ENCODE measurements at regions of chr6 and their contacts with region 1.

Region 1: GRCh38 chr6:18264219-18264922 is at the start of gene DEK:
- DNase-seq: peak; percentile 85
- ATAC-seq: peak; percentile 68
- H3K4me3 ChIP-seq: peak within 1 kb of the TSS; percentile 68 to 89 (median 83)
- H3K4me3 Mint-ChIP-seq: peak within 1 kb of the TSS; percentile 93
- H3K27ac ChIP-seq: peak within 1 kb of the TSS; percentile 62 to 85
- H3K27ac Mint-ChIP-seq: peak within 1 kb of the TSS; percentile 98
- H3K4me1 ChIP-seq: peaks cover 42 to 47% of the 10 kb centered on the region in 2 donors
- H3K4me1 Mint-ChIP-seq: peaks cover 49% of the 10 kb centered on the region
- H3K27me3 ChIP-seq: peaks cover 0 to 3% (median 0%) of the 10 kb centered on the region in 4 experiments
- H3K27me3 Mint-ChIP-seq: no peaks in the 10 kb centered on the region
- CTCF ChIP-seq: peak; percentile 53
- total RNA-seq, gene DEK: 103 and 114 TPM in 2 replicates

Region 2: DNA sequence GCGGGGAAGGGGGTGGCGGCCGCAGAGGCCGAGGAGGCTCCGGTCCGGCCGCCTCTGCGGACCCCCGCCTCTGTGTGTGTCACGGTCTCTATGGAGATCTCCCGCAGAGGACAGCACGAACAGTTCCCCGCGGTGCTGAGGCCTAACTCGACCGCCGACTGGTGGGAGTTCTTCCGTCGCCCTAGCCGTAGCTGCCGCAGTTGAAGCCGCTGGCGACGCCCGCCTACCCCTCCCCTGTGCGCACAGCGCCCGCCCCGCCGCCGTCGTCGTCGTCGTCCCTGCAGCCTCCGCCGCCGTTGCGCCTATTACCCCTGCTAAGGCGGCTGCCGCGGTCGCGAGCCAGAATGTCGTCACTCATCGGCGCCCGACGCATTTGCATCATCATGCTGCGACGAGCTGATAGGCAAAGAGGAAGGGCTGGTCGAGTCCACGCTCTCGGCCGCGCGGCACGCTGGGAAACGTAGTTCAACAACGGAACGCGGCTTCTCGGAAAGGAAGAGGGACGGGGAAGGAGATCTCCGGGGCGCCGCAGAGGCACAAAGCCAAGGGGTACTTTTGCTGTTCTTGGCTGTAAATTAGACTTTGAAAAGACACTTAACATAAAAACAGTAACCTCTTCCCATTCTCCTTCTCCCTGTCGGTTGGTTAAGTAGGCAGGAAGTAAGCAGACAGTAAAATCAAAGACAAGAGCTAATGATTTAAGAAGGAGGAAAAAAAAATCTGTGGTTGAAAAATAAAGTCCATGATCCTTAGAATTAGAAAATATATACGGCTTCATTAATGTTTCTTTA is 557.6 kb before region 1 on chr6 and contains the start of gene NUP153:
- CTCF ChIA-PET with region 1: no interaction called
- POLR2A ChIA-PET with region 1: no interaction called
- intact Hi-C with region 1: loop called (anchors 2 kb)
- DNase-seq: peak; percentile 100
- ATAC-seq: peak; percentile 67
- H3K4me3 ChIP-seq: peak within 1 kb of the TSS; percentile 71 to 98 (median 94)
- H3K4me3 Mint-ChIP-seq: peak within 1 kb of the TSS; percentile 96
- H3K27ac ChIP-seq: peak within 1 kb of the TSS; percentile 99
- H3K27ac Mint-ChIP-seq: peak within 1 kb of the TSS; percentile 100
- H3K4me1 ChIP-seq: peaks cover 39 to 45% of the 10 kb centered on the region in 2 donors
- H3K4me1 Mint-ChIP-seq: peaks cover 30% of the 10 kb centered on the region
- H3K27me3 ChIP-seq: no peaks in the 10 kb centered on the region
- H3K27me3 Mint-ChIP-seq: no peaks in the 10 kb centered on the region
- CTCF ChIP-seq: no peak
- total RNA-seq, gene NUP153: 70.5 and 74.6 TPM in 2 replicates

Region 3: DNA sequence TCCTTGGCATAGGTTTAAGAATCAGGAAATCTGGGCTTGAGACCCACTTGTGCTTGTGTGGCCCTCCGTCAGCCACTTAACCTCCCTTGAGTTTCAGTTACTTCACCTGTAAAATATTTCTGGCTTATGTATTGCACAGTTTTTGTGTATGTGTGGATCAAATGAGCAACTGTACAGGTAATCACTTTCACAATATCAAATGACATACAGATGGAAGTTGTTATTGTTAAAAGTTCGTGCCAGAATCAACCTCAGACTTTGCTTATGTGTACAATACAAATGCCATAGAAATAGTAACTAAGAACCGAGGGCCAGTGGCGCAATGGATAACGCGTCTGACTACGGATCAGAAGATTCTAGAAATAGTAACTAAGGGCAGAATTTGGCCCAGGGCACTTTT is 211.3 kb before region 1 on chr6:
- CTCF ChIA-PET with region 1: no interaction called
- POLR2A ChIA-PET with region 1: no interaction called
- intact Hi-C with region 1: no loop called
- DNase-seq: no peak
- ATAC-seq: no peak
- H3K4me3 ChIP-seq: no peak overlapping the region
- H3K4me3 Mint-ChIP-seq: no peak overlapping the region
- H3K27ac ChIP-seq: no peak overlapping the region
- H3K27ac Mint-ChIP-seq: no peak overlapping the region
- H3K4me1 ChIP-seq: no peaks in the 10 kb centered on the region
- H3K4me1 Mint-ChIP-seq: no peaks in the 10 kb centered on the region
- H3K27me3 ChIP-seq: no peaks in the 10 kb centered on the region
- H3K27me3 Mint-ChIP-seq: peaks cover 8% of the 10 kb centered on the region
- CTCF ChIP-seq: no peak

Region 4: GRCh38 chr6:18155150-18155863 is 109.1 kb before region 1 on chr6 and contains the start of gene KDM1B:
- CTCF ChIA-PET with region 1: no interaction called
- POLR2A ChIA-PET with region 1: no interaction called
- intact Hi-C with region 1: loop called (anchors 1 kb)
- DNase-seq: peak; percentile 99
- ATAC-seq: peak; percentile 92
- H3K4me3 ChIP-seq: peak within 1 kb of the TSS; percentile 75 to 99 (median 89)
- H3K4me3 Mint-ChIP-seq: peak within 1 kb of the TSS; percentile 99
- H3K27ac ChIP-seq: peak within 1 kb of the TSS; percentile 83 to 87
- H3K27ac Mint-ChIP-seq: peak within 1 kb of the TSS; percentile 98
- H3K4me1 ChIP-seq: peaks cover 25 to 29% of the 10 kb centered on the region in 2 donors
- H3K4me1 Mint-ChIP-seq: peaks cover 24% of the 10 kb centered on the region
- H3K27me3 ChIP-seq: no peaks in the 10 kb centered on the region
- H3K27me3 Mint-ChIP-seq: no peaks in the 10 kb centered on the region
- CTCF ChIP-seq: no peak
- total RNA-seq, gene KDM1B: 10.0 and 10.9 TPM in 2 replicates

Region 5: DNA sequence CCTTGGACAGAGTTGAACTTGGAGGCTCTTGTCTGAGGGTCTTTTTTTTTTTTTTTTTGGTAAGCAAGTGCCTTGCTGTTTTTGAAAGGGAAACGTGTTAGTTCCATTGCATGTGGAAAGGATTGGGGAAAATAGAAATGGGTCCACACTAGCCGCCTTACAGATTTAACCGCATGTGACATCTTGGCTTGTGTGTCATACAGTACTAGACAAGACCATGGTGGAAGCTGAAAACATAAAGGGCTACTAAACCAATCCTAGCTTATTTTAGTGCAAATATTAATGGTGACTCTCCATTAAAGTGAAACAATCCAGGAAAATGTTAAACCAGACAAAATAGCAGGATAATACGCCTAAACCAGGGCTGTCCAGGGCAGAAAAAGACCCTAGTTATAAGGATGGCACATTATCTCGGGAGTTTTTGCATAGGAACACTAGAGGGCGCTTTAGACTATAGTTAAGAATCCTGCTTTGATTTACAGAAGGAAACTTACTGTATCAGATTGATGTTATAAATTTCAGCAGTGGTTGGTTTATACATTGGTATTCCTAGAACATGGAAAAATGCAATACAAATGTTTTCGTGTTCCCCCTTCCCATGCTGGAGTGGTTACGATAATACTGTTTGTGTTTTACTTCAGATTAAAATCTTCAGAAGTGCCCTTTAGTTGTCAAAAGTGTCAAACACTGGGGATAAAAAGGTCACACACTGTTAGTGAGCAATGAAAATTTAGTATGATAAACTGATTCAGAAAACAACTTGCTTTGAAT is 59.7 kb after region 1 on chr6:
- CTCF ChIA-PET with region 1: interaction called, 3 read pairs
- POLR2A ChIA-PET with region 1: no interaction called
- intact Hi-C with region 1: loop called (anchors 2 kb)
- DNase-seq: peak; percentile 74
- ATAC-seq: peak; percentile 50
- H3K4me3 ChIP-seq: no peak overlapping the region
- H3K4me3 Mint-ChIP-seq: no peak overlapping the region
- H3K27ac ChIP-seq: no peak overlapping the region
- H3K27ac Mint-ChIP-seq: no peak overlapping the region
- H3K4me1 ChIP-seq: peaks cover 14 to 21% of the 10 kb centered on the region in 2 donors
- H3K4me1 Mint-ChIP-seq: peaks cover 33% of the 10 kb centered on the region
- H3K27me3 ChIP-seq: no peaks in the 10 kb centered on the region
- H3K27me3 Mint-ChIP-seq: no peaks in the 10 kb centered on the region
- CTCF ChIP-seq: peak; percentile 91

Region 6: GRCh38 chr6:18503593-18504231 is 239.3 kb after region 1 on chr6:
- CTCF ChIA-PET with region 1: interaction called, 3 read pairs
- POLR2A ChIA-PET with region 1: no interaction called
- intact Hi-C with region 1: loop called (anchors 5 kb)
- DNase-seq: peak; percentile 74
- ATAC-seq: peak; percentile 79
- H3K4me3 ChIP-seq: peak overlapping the region in 3 of 5 experiments; percentile 22 to 41 (median 40)
- H3K4me3 Mint-ChIP-seq: peak overlapping the region; percentile 74
- H3K27ac ChIP-seq: no peak overlapping the region
- H3K27ac Mint-ChIP-seq: no peak overlapping the region
- H3K4me1 ChIP-seq: peaks cover 7 to 17% of the 10 kb centered on the region in 2 donors
- H3K4me1 Mint-ChIP-seq: peaks cover 12% of the 10 kb centered on the region
- H3K27me3 ChIP-seq: no peaks in the 10 kb centered on the region
- H3K27me3 Mint-ChIP-seq: no peaks in the 10 kb centered on the region
- CTCF ChIP-seq: peak; percentile 97

Region 7: DNA sequence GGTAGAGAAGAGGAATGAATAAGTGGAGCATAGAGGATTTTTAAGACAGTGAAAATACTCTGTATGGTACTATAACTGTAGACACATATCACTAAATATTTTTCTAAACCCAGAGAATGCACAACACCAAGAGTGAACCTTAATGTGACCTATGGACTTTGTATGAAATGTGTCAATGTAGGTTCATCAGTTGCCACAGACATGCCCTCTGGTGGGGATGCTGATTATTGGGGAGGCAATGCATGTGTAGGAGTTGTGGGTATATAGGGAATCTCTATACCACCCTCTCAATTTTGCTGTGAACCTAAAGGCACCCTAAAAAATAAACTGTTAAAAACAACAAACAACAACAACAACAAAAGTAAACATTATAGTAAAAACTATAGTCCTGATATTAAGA is 416.5 kb after region 1 on chr6:
- CTCF ChIA-PET with region 1: no interaction called
- POLR2A ChIA-PET with region 1: no interaction called
- intact Hi-C with region 1: no loop called
- DNase-seq: no peak
- ATAC-seq: no peak
- H3K4me3 ChIP-seq: no peak overlapping the region
- H3K4me3 Mint-ChIP-seq: no peak overlapping the region
- H3K27ac ChIP-seq: no peak overlapping the region
- H3K27ac Mint-ChIP-seq: no peak overlapping the region
- H3K4me1 ChIP-seq: no peaks in the 10 kb centered on the region
- H3K4me1 Mint-ChIP-seq: no peaks in the 10 kb centered on the region
- H3K27me3 ChIP-seq: no peaks in the 10 kb centered on the region
- H3K27me3 Mint-ChIP-seq: no peaks in the 10 kb centered on the region
- CTCF ChIP-seq: no peak

Measured in B cell (primary cell).